Panc1 (cell line): ENCODE measurements at regions of chr10 and their contacts with region 1.

Region 1: GRCh38 chr10:51488766-51489408 is 210.5 kb downstream of the CSTF2T start:
- DNase-seq: no peak
- ATAC-seq: no peak
- H3K4me3 ChIP-seq: no peak overlapping the region
- H3K27ac ChIP-seq: no peak overlapping the region
- H3K4me1 ChIP-seq: no peaks in the 10 kb centered on the region
- H3K27me3 ChIP-seq: no peaks in the 10 kb centered on the region
- CTCF ChIP-seq: no peak

Region 2: DNA sequence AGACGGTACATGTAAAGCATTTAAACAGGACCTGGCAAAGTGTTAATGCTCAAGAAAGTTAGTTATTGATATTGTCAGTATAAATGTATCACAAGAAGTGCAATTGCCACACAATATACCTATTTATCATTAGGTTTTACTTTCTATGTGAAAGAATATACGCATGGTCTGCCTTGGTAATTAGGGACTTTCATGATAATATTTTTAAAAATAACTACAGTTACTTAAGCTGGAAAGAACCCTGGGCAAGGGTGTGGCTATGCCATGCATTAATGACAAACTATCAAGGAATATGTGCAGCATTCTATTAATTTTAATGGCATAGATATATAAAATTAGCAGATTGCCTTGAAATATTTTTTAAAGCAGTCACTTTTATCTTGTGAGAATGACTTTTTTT is 19.3 kb after region 1 on chr10:
- CTCF ChIA-PET with region 1: no interaction called
- POLR2A ChIA-PET with region 1: no interaction called
- in situ Hi-C with region 1: no loop called
- intact Hi-C with region 1: loop called (anchors 2 kb)
- DNase-seq: no peak
- ATAC-seq: no peak
- H3K4me3 ChIP-seq: no peak overlapping the region
- H3K27ac ChIP-seq: no peak overlapping the region
- H3K4me1 ChIP-seq: no peaks in the 10 kb centered on the region
- H3K27me3 ChIP-seq: no peaks in the 10 kb centered on the region
- CTCF ChIP-seq: no peak